T-cell (primary cell): ENCODE measurements at regions of chr18 and their contacts with region 1.

Region 1: GRCh38 chr18:65968239-65969004 is 217.6 kb downstream of the CDH7 start:
- DNase-seq: no peak
- ATAC-seq: no peak
- H3K4me3 ChIP-seq: no peak overlapping the region
- H3K4me3 Mint-ChIP-seq: no peak overlapping the region
- H3K27ac ChIP-seq: no peak overlapping the region
- H3K27ac Mint-ChIP-seq: no peak overlapping the region
- H3K4me1 ChIP-seq: no peaks in the 10 kb centered on the region
- H3K4me1 Mint-ChIP-seq: no peaks in the 10 kb centered on the region
- H3K27me3 ChIP-seq: no peaks in the 10 kb centered on the region
- H3K27me3 Mint-ChIP-seq: no peaks in the 10 kb centered on the region

Region 2: DNA sequence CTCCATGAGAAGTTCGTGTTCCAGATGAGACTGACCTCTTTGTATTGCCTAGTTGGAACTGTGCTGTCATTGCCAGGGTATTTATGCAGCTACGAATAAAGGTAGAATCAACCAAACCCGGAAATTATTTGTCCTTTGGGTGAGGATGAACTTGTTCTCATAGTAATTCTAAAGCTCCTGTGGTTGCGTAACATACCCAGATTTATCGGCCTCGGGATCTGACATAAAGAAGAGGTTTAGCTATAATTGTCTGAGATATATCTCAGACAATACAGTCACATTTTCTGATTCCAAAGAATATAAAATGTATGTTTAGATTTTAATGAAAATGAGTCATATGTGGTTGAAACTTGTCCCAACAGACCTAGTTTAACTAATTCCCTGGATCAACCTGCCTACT is 1190.9 kb before region 1 on chr18:
- CTCF ChIA-PET with region 1: interaction called in 1 of 2 experiments, 11 read pairs
- POLR2A ChIA-PET with region 1: no interaction called
- DNase-seq: no peak
- ATAC-seq: no peak
- H3K4me3 ChIP-seq: no peak overlapping the region
- H3K4me3 Mint-ChIP-seq: no peak overlapping the region
- H3K27ac ChIP-seq: no peak overlapping the region
- H3K27ac Mint-ChIP-seq: no peak overlapping the region
- H3K4me1 ChIP-seq: no peaks in the 10 kb centered on the region
- H3K4me1 Mint-ChIP-seq: no peaks in the 10 kb centered on the region
- H3K27me3 ChIP-seq: no peaks in the 10 kb centered on the region
- H3K27me3 Mint-ChIP-seq: no peaks in the 10 kb centered on the region